ENCODE measurements at regions of chr2 and their contacts with region 1.

Region 1: DNA sequence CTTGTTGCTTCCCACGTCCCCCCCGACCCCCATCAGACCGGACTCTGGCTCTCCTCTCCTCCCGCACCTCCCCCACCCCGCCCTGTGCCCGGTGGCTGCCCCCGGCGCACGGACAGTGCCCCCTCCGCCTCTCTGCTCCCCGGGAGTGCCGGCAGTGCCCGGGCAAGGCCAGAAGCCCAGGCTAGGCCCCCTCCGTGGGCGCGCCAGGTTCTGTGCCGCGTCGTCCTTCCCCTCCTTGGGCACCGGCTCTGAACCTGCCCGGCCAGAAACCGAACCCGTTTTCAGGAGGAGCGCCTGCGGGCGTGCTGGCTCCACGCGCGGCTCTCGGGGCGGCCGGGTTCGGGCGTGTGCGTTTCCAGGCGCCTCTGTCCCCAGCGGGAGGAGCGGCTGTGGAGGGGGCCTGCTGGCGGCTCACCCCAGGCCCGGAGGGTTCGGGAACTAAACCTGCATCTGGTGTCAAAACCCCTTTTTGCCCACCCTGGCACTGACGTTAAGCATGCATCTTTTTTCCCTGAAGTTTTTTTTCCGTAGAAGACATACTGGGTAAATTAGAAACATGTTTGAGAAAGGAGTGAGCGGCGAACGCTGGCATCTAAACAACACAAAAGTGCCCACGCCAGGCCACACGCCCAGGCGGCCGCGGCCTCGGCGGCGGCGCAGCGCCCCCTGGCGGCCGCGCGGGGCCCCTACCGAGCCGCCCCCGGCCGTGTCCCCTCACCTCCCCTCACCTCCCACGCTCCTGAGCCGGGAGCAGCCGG is 123.9 kb upstream of the SLC1A4 start:
- DNase-seq: peak; percentile 68 to 82 (median 71)
- ATAC-seq: peak; percentile 62 to 90 (median 80)
- H3K4me3 ChIP-seq: peak overlapping the region; percentile 47 to 88 (median 82)
- H3K27ac ChIP-seq: peak overlapping the region; percentile 77 to 94 (median 90)
- H3K4me1 ChIP-seq: peaks cover 0 to 58% (median 6%) of the 10 kb centered on the region in 12 donors
- H3K27me3 ChIP-seq: no peaks in the 10 kb centered on the region
- CTCF ChIP-seq: peak; percentile 28 to 100 (median 81)
- POLR2A ChIP-seq: no peak

Region 2: GRCh38 chr2:64523666-64524603 is 341.3 kb before region 1 on chr2 and contains the start of gene AFTPH:
- intact Hi-C with region 1: loop called in 9 of 10 experiments (anchors 2 to 5 kb)
- DNase-seq: peak; percentile 99 to 100 (median 99)
- ATAC-seq: peak; percentile 99 to 100 (median 99)
- H3K4me3 ChIP-seq: peak within 1 kb of the TSS; percentile 70 to 97 (median 94)
- H3K27ac ChIP-seq: peak within 1 kb of the TSS; percentile 85 to 98 (median 94)
- H3K4me1 ChIP-seq: peaks cover 0 to 42% (median 28%) of the 10 kb centered on the region in 12 donors
- H3K27me3 ChIP-seq: no peaks in the 10 kb centered on the region
- CTCF ChIP-seq: no peak
- POLR2A ChIP-seq: peak in 1 of 2 donors; percentile 77
- total RNA-seq, gene AFTPH: 9.2 to 15.2 (median 11.4) TPM

Region 3: DNA sequence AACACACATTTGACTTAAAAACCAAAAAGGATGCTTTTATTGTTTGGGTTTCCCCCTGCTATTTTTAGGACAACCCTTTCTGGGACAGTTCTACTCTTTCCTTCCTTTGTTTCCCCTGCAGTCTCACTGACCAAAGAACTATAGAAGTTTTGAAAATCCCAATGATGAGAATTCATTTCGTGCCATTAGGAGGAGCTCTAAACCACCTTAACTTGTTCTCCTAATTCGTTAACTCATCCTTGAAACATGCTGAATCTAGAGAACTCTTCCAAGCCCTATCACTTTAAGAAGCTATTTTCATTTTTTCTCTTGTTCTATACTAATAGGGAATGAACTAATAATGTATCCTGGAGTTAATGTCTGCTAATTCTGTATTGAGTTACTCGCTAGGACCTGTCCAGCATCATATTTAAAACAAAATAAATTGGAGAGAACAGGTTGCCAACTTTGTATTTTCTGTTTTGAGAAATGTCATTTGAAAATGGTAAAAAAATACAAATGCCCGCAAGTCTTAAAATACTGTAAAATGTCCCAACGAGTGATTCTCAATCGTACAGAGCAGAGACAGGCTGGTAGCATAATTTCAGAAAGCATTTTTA is 278.3 kb before region 1 on chr2:
- intact Hi-C with region 1: loop called in 9 of 10 experiments (anchors 1 to 5 kb)
- DNase-seq: no peak
- ATAC-seq: peak in 3 of 4 donors; percentile 64 to 70 (median 66)
- H3K4me3 ChIP-seq: no peak overlapping the region
- H3K27ac ChIP-seq: peak overlapping the region in 1 of 12 donors; percentile 17
- H3K4me1 ChIP-seq: peaks cover 0 to 11% (median 0%) of the 10 kb centered on the region in 12 donors
- H3K27me3 ChIP-seq: no peaks in the 10 kb centered on the region
- CTCF ChIP-seq: peak; percentile 40 to 78 (median 69)
- POLR2A ChIP-seq: no peak

Region 4: GRCh38 chr2:64609227-64609941 is 255.9 kb before region 1 on chr2:
- intact Hi-C with region 1: loop called in 1 of 10 experiments (anchors 5 kb)
- DNase-seq: peak; percentile 59 to 86 (median 68)
- ATAC-seq: peak; percentile 36 to 86 (median 65)
- H3K4me3 ChIP-seq: peak overlapping the region; percentile 20 to 88 (median 68)
- H3K27ac ChIP-seq: peak overlapping the region; percentile 39 to 86 (median 72)
- H3K4me1 ChIP-seq: peaks cover 0 to 30% (median 8%) of the 10 kb centered on the region in 12 donors
- H3K27me3 ChIP-seq: no peaks in the 10 kb centered on the region
- CTCF ChIP-seq: peak in 10 of 12 donors; percentile 13 to 71 (median 32)
- POLR2A ChIP-seq: peak in 1 of 2 donors; percentile 15

Region 5: DNA sequence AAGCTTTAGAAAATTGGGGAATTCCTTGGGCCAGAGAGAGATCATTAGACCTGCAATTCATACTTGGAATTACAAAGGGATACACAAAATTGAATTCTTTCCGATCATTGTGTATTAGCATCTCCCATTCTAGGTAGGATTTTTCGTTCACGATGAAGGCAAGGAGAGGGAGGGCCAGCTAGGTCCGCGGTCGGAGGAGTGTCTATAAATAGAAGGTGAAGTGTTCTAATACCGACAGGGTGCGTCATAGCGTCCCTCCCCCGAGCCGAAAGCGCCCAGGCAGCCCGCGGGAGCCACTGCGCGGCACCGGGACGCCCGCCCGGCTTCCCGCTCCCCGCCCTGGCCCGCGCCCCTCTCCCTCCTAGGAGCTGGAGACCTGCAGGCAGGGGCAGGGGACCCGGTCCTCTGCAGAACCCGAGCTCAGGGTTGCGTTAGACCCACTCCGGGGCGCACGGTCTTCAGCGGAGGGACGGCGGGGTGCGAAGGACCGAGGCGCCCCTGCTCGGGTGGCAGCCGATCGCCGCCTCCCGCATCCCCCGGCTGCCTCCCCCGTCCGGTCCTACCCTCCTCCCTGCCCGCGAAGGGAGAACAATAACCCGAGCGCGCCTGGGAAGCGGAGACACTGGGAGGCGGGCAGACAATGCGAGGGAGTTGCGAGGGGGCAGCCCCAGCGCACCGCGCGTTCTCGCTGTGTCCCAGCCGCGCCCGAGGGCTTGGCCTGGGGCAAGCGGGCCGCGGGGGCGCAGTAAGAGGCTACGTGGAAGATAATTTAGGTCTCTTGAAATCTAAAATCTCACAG is 97.4 kb before region 1 on chr2:
- intact Hi-C with region 1: loop called in 2 of 10 experiments (anchors 2 to 5 kb)
- DNase-seq: peak; percentile 93 to 95 (median 93)
- ATAC-seq: peak; percentile 94 to 97 (median 96)
- H3K4me3 ChIP-seq: peak overlapping the region; percentile 34 to 94 (median 77)
- H3K27ac ChIP-seq: peak overlapping the region; percentile 91 to 100 (median 98)
- H3K4me1 ChIP-seq: peaks cover 0 to 39% (median 21%) of the 10 kb centered on the region in 12 donors
- H3K27me3 ChIP-seq: no peaks in the 10 kb centered on the region
- CTCF ChIP-seq: peak in 6 of 12 donors; percentile 6 to 38 (median 16)
- POLR2A ChIP-seq: peak; percentile 38 to 93